Activated B cell treated with CpG ODN at 0.5 μM for 24 hours (primary cell): ENCODE measurements at regions of chr6 and their contacts with region 1.

Region 1: DNA sequence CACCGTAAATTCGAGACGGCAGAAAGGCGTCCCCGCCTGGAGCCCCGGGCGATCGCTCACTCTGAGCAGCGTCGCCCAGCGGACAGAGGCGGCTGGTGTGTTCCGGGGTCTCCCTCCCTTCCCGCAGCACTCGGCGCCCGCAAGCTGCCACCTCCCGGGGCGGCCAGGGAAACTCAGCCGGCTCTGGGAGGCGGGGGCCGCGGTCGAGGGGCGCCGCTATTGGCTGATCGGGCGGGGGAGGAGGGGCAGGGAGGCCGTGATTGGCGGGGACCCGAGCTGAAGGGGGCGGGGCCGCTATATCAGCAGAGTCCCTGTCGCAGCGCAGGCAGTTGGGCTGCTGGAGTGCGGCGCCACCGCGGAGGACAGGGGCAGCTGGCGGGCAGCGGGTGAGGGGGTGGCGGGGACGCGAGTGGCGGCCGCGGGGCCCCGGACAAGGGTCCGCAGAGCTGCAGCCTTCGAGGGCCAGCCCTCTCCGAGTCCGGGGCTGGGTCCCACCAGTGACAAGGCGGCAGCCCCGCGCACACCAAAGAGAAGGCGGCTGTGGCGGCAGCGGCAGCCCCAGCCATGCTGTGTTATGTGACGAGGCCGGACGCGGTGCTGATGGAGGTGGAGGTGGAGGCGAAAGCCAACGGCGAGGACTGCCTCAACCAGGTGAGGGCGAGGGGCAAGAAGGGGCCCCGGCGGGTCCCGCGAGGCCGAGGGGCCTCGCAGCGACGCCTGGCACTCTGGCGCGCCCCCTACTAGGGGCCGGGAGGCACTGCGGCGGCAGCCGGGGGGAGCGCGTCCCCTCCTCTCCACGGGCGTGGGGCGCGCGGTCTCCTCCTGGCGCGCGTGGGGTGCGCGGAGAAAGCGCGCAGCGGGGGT is at the start of gene MYLIP:
- DNase-seq: peak; percentile 96
- ATAC-seq: peak; percentile 88
- H3K4me3 Mint-ChIP-seq: peak within 1 kb of the TSS; percentile 92
- H3K27ac Mint-ChIP-seq: peak within 1 kb of the TSS; percentile 83
- H3K4me1 Mint-ChIP-seq: peaks cover 59% of the 10 kb centered on the region
- H3K27me3 Mint-ChIP-seq: no peaks in the 10 kb centered on the region
- CTCF ChIP-seq: no peak
- total RNA-seq, gene MYLIP: 9.7 and 10.3 TPM in 2 replicates

Region 2: DNA sequence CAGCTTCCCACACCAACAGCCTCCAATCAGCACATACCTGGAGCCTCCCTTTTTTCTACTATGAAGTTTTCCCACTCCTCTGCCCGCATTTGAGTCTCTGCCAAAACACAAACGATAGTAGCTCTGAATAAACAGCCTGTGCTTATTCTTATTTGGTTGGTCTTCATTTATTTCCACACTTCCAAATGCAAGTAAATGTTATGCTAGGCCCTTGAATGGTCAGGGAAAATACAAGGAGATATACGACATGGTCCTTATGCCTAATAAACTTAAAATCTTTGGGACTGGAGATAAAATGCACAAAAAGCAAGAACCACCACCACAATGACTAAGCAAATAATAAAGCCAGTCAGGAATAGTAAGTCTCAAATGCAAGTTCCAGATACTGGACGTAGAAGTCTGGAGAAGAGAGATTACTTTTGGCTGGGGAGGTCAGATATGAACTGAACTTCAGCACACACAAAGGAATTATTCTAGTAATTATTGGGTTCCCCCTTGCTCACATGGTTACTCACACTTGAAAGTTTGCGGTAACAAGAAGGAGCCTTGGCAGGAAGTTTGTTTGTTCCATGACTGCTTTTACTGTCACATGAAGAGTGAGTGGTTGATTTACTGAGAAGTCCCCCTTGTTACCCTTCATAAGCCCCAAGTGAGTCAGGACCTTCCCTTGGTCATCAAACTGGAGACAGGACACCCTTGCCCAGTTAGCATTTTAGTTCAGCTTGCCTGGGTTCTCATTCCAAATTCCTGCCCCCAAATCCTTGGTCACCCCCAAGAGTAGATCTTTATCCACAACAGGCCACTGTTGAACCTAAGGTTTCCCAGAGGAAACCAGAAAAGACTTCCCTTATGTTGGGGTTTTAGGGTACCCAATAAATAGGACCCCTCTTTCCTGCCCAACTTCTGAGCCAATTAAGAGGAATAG is 1394.3 kb before region 1 on chr6:
- CTCF ChIA-PET with region 1: no interaction called
- POLR2A ChIA-PET with region 1: no interaction called
- intact Hi-C with region 1: loop called (anchors 10 kb)
- DNase-seq: no peak
- ATAC-seq: peak; percentile 81
- H3K4me3 Mint-ChIP-seq: peak overlapping the region; percentile 71
- H3K27ac Mint-ChIP-seq: peak overlapping the region; percentile 76
- H3K4me1 Mint-ChIP-seq: peaks cover 99% of the 10 kb centered on the region
- H3K27me3 Mint-ChIP-seq: no peaks in the 10 kb centered on the region
- CTCF ChIP-seq: no peak

Region 3: DNA sequence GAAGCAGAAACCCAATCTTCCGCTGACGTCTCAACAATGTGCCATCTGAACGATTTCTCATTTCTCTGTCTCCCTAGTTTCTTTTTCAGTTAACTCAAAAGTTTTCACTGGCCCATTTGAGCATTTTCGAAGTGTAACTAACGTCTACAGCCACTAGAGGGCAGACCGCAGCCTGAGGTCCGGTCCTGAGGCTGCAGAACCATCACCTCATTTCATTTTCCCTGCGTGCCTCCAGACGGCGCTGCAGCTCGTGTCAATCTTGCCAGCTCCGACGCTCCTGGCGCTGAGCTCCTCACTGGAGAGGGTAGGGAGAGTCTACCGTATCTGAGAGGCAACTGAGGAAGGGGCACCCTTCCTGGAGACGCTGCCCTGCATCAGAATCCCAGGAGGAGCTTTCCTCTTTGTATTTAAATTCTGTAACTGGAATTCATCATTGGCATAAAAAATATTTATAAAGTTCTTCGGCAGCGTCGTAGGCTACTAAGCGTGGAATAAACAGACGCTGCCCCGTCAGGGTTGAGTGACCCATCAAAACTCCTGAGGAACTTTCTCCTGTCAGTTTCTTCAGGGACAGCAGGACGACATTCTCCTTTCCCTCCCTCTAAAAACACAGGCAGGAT is 437.6 kb before region 1 on chr6:
- CTCF ChIA-PET with region 1: interaction called, 42 read pairs
- POLR2A ChIA-PET with region 1: interaction called, 7 read pairs
- intact Hi-C with region 1: loop called (anchors 1 kb)
- DNase-seq: peak; percentile 64
- ATAC-seq: peak; percentile 99
- H3K4me3 Mint-ChIP-seq: peak overlapping the region; percentile 17
- H3K27ac Mint-ChIP-seq: no peak overlapping the region
- H3K4me1 Mint-ChIP-seq: peaks cover 9% of the 10 kb centered on the region
- H3K27me3 Mint-ChIP-seq: peaks cover 2% of the 10 kb centered on the region
- CTCF ChIP-seq: peak; percentile 95

Region 4: DNA sequence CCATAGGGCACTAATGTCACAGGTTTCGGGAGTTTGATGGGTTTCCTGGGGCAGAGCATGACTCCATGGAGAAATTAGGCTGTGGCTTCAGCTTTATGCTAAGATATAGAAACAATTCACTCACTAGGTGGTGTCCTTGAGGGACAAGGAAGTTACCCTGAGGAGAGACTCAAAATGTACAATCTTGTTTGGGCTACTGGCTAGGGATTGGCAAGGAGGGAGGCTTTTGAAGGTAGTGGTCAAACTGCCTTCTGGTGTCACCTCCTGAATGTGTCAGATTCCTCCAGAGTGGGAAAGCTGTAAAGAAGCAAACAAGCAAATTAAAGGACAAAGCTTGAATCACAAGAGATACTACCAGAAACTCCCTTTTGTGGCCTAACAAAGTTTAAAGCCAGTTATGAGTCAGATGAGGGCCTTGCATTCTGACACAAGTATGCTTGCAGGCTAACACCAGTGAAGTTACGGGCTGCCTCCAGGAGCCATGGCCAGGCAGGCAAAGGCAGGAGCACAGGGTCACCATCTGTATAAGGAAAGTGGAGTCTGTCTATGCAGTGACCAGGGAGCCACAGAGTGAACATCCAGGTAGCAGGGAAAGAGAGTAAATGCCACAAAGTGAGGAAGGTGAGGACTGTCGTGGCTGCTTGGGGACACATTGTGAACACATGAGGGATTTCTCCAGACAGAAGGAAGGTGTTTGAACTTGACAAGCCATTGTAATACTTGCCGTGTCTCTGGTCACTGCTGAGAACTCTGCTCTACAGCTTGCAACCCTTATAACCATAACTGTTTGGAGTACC is 358.4 kb before region 1 on chr6:
- CTCF ChIA-PET with region 1: interaction called, 11 read pairs
- POLR2A ChIA-PET with region 1: interaction called, 15 read pairs
- intact Hi-C with region 1: loop called (anchors 1 kb)
- DNase-seq: no peak
- ATAC-seq: peak; percentile 42
- H3K4me3 Mint-ChIP-seq: no peak overlapping the region
- H3K27ac Mint-ChIP-seq: no peak overlapping the region
- H3K4me1 Mint-ChIP-seq: peaks cover 4% of the 10 kb centered on the region
- H3K27me3 Mint-ChIP-seq: peaks cover 3% of the 10 kb centered on the region
- CTCF ChIP-seq: no peak

Region 5: DNA sequence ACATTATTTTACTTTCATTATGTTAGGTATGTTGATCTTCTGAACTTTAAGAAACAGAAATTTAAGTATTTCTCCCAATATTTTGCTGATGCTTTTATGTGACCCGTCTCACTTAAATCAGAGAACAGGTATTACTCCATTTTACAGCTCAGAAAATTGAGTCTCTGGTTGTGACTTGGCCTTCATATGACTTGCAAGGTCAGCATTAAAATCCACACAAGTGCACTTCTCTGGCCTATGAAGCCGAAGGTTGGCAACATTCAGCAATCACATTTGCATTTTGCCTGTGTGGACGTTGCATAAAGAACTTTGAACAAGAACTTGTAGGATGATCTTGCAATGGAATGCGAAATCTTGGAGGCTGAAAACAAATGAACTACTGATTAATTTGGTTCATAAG is 10.2 kb before region 1 on chr6:
- CTCF ChIA-PET with region 1: interaction called, 10 read pairs
- POLR2A ChIA-PET with region 1: no interaction called
- intact Hi-C with region 1: no loop called
- DNase-seq: no peak
- ATAC-seq: no peak
- H3K4me3 Mint-ChIP-seq: no peak overlapping the region
- H3K27ac Mint-ChIP-seq: no peak overlapping the region
- H3K4me1 Mint-ChIP-seq: no peaks in the 10 kb centered on the region
- H3K27me3 Mint-ChIP-seq: peaks cover 3% of the 10 kb centered on the region
- CTCF ChIP-seq: no peak

Region 6: DNA sequence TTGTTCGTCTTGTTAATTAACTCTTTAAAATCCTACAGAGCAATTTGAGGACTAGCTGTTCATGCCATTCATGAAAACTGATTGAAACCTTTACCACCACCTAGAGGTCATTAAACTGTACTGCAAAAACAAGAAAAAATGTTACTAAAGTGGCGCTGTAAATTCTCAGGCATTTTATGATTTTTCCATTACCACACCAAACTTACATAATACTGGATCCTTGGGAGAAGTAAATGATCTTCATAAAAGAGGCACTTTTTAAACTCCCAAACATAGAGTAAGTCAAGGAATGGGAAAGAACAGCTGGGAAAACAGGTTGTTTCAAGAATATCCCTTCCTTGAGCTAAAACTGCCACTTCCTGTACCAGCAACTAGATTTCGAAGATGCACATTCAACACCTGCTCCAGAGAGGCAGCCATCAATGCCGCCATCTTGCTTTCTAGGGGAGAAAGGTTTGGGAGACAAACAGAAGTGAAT is 54.2 kb after region 1 on chr6:
- CTCF ChIA-PET with region 1: interaction called, 14 read pairs
- POLR2A ChIA-PET with region 1: interaction called, 6 read pairs
- intact Hi-C with region 1: loop called (anchors 1 kb)
- DNase-seq: no peak
- ATAC-seq: peak; percentile 56
- H3K4me3 Mint-ChIP-seq: no peak overlapping the region
- H3K27ac Mint-ChIP-seq: no peak overlapping the region
- H3K4me1 Mint-ChIP-seq: peaks cover 19% of the 10 kb centered on the region
- H3K27me3 Mint-ChIP-seq: no peaks in the 10 kb centered on the region
- CTCF ChIP-seq: peak; percentile 35

Region 7: GRCh38 chr6:16305246-16305725 is 176.3 kb after region 1 on chr6:
- CTCF ChIA-PET with region 1: no interaction called
- POLR2A ChIA-PET with region 1: no interaction called
- intact Hi-C with region 1: loop called (anchors 5 kb)
- DNase-seq: peak; percentile 37
- ATAC-seq: peak; percentile 96
- H3K4me3 Mint-ChIP-seq: peak overlapping the region; percentile 82
- H3K27ac Mint-ChIP-seq: peak overlapping the region; percentile 65
- H3K4me1 Mint-ChIP-seq: peaks cover 36% of the 10 kb centered on the region
- H3K27me3 Mint-ChIP-seq: no peaks in the 10 kb centered on the region
- CTCF ChIP-seq: no peak

Region 8: GRCh38 chr6:16380220-16380809 is 251.3 kb after region 1 on chr6:
- CTCF ChIA-PET with region 1: no interaction called
- POLR2A ChIA-PET with region 1: no interaction called
- intact Hi-C with region 1: no loop called
- DNase-seq: no peak
- ATAC-seq: no peak
- H3K4me3 Mint-ChIP-seq: no peak overlapping the region
- H3K27ac Mint-ChIP-seq: no peak overlapping the region
- H3K4me1 Mint-ChIP-seq: peaks cover 38% of the 10 kb centered on the region
- H3K27me3 Mint-ChIP-seq: no peaks in the 10 kb centered on the region
- CTCF ChIP-seq: no peak